ENCODE measurements at regions of chr1 and their contacts with region 1.

Region 1: GRCh38 chr1:156838981-156839410 is 19.9 kb downstream of the INSRR start:
- DNase-seq: no peak
- ATAC-seq: peak; percentile 57
- H3K4me3 ChIP-seq: no peak overlapping the region
- H3K27ac ChIP-seq: no peak overlapping the region
- H3K4me1 ChIP-seq: peaks cover 24% of the 10 kb centered on the region
- H3K27me3 ChIP-seq: no peaks in the 10 kb centered on the region; a peak in 1 of 4 replicates
- CTCF ChIP-seq: peak; percentile 80 to 94 (median 91)
- EP300 ChIP-seq: no peak
- POLR2A ChIP-seq: no peak
- RAD21 ChIP-seq: peak; percentile 86

Region 2: GRCh38 chr1:156797212-156797871 is 41.7 kb before region 1 on chr1:
- CTCF ChIA-PET with region 1: interaction called, 60 read pairs
- POLR2A ChIA-PET with region 1: interaction called, 3 read pairs
- RAD21 ChIA-PET with region 1: interaction called, 7 read pairs
- SMC1A ChIA-PET with region 1: interaction called, 21 read pairs
- in situ Hi-C with region 1: no loop called
- intact Hi-C with region 1: loop called (anchors 5 kb)
- DNase-seq: no peak
- ATAC-seq: peak; percentile 94
- H3K4me3 ChIP-seq: no peak overlapping the region
- H3K27ac ChIP-seq: no peak overlapping the region
- H3K4me1 ChIP-seq: peaks cover 17% of the 10 kb centered on the region
- H3K27me3 ChIP-seq: no peaks in the 10 kb centered on the region
- CTCF ChIP-seq: peak; percentile 78 to 88 (median 82)
- EP300 ChIP-seq: no peak
- POLR2A ChIP-seq: no peak
- RAD21 ChIP-seq: peak; percentile 84

Region 3: DNA sequence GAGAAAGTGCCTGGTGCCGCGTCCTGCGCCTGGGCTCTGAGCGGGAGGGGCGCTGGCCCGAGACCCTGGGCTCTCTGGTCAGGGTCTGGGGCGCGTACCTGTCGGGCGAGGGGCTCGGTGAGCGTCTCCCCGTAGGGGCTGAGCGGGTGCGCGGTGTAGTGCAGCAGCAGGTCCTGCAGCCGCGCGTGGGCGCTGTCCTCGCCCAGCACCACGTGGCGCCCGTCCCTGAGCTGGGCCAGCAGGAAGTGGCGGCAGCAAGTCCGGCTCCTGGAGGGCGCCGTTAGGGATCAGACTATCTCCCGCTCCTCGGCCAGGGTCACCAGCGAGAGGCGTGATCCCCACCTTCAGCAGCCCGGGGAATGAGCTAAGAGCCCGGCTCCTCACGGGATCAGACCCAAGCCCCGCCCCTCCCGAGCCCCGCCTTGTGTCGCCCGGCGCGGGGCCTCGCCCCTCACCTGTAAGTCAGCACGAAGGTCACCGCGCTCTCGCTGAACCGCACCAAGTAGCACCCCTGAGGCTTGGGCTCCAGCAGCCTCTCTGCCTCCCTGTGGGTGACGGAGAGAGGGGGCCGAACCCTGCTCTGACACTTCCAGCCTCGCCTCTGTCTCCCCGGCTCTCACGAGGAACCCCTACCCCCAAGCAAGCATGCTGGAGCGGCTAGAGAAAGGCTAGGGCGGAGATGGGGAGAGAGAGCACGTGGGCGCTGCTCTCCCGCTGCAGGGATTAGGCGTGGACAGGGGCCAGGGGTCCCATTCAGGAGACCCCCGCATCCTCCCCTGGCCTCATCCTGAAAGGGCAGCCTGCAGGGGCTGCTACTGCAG is 25.0 kb before region 1 on chr1:
- CTCF ChIA-PET with region 1: interaction called, 52 read pairs
- POLR2A ChIA-PET with region 1: interaction called, 3 read pairs
- RAD21 ChIA-PET with region 1: interaction called, 8 read pairs
- SMC1A ChIA-PET with region 1: interaction called, 20 read pairs
- in situ Hi-C with region 1: no loop called
- intact Hi-C with region 1: no loop called
- DNase-seq: no peak
- ATAC-seq: peak; percentile 69
- H3K4me3 ChIP-seq: peak overlapping the region; percentile 59; the same call in 1 of the 2 replicates
- H3K27ac ChIP-seq: no peak overlapping the region
- H3K4me1 ChIP-seq: peaks cover 20% of the 10 kb centered on the region
- H3K27me3 ChIP-seq: no peaks in the 10 kb centered on the region
- CTCF ChIP-seq: peak; percentile 57 to 80 (median 57)
- EP300 ChIP-seq: no peak
- POLR2A ChIP-seq: peak; percentile 68
- RAD21 ChIP-seq: no peak

Region 4: DNA sequence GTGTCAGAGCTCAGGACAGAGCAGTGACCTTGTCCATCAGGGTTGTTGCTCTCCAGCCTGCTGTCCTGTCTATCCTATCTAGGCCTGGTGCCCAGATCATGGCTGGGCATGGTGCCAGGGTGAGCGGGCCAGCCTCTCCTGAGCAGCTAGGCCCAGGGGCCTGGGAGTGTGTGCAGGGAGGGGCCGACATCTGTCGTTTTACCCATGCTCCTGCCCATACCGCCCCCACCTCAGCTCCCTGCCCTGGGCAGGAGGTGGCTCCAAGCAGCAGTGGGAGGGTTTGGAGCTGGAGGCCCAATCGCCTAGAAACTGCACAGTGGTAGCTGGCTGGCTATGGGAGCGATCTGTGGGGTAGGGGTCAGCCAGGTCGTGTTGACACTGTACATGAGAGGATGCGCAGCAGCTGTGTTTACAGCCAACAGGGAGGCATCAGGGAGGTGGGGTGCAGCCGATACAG is 13.4 kb after region 1 on chr1:
- CTCF ChIA-PET with region 1: interaction called, 248 read pairs
- POLR2A ChIA-PET with region 1: interaction called, 4 read pairs
- RAD21 ChIA-PET with region 1: interaction called, 113 read pairs
- SMC1A ChIA-PET with region 1: interaction called, 123 read pairs
- in situ Hi-C with region 1: no loop called
- intact Hi-C with region 1: no loop called
- DNase-seq: no peak
- ATAC-seq: no peak
- H3K4me3 ChIP-seq: no peak overlapping the region
- H3K27ac ChIP-seq: no peak overlapping the region
- H3K4me1 ChIP-seq: no peaks in the 10 kb centered on the region
- H3K27me3 ChIP-seq: peaks cover 0 to 6% of the 10 kb centered on the region in 2 experiments; a peak in 2 of 4 replicates
- CTCF ChIP-seq: no peak
- EP300 ChIP-seq: no peak
- POLR2A ChIP-seq: no peak
- RAD21 ChIP-seq: no peak

Region 5: GRCh38 chr1:156892190-156893047 is 53.4 kb after region 1 on chr1:
- CTCF ChIA-PET with region 1: interaction called, 90 read pairs
- POLR2A ChIA-PET with region 1: interaction called, 3 read pairs
- RAD21 ChIA-PET with region 1: interaction called, 42 read pairs
- SMC1A ChIA-PET with region 1: interaction called, 19 read pairs
- in situ Hi-C with region 1: no loop called
- intact Hi-C with region 1: loop called (anchors 2 kb)
- DNase-seq: no peak
- ATAC-seq: peak; percentile 95
- H3K4me3 ChIP-seq: no peak overlapping the region
- H3K27ac ChIP-seq: no peak overlapping the region
- H3K4me1 ChIP-seq: no peaks in the 10 kb centered on the region
- H3K27me3 ChIP-seq: peaks cover 5 to 11% of the 10 kb centered on the region in 2 experiments
- CTCF ChIP-seq: peak; percentile 63 to 87 (median 68)
- EP300 ChIP-seq: no peak
- POLR2A ChIP-seq: no peak
- RAD21 ChIP-seq: peak; percentile 38; the same call in 1 of the 2 replicates